PC-3 (cell line): ENCODE measurements at regions of chr2 and their contacts with region 1.

Region 1: GRCh38 chr2:197515739-197516392 is at the start of gene MOB4:
- DNase-seq: peak; percentile 95
- ATAC-seq: peak; percentile 92
- H3K4me3 ChIP-seq: peak within 1 kb of the TSS; percentile 89
- H3K27ac ChIP-seq: peak within 1 kb of the TSS; percentile 48
- H3K4me1 ChIP-seq: peaks cover 17% of the 10 kb centered on the region
- H3K27me3 ChIP-seq: no peaks in the 10 kb centered on the region
- CTCF ChIP-seq: no peak
- total RNA-seq, gene MOB4: 16.8 and 24.9 TPM in 2 replicates

Region 2: DNA sequence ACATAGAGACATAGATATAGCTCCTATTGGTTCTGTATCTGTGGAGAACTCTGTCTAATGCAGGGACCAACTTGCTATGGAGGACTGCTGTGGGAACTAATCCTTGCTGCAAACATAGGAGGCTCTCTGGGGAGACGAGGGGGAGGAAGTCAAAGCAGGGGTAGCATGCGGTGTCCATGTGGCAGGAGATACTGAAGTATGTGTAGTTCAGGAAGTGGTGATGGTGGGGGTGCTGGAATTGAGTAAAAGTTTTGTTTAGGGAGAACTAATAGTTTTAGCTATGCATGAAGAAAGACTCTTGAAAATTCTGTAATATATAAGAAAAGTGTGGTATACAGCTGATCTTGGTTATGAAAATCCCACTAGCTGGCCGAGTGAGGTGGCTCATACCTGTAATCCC is 267.2 kb before region 1 on chr2:
- CTCF ChIA-PET with region 1: no interaction called
- POLR2A ChIA-PET with region 1: no interaction called
- intact Hi-C with region 1: no loop called
- DNase-seq: no peak
- ATAC-seq: no peak
- H3K4me3 ChIP-seq: no peak overlapping the region
- H3K27ac ChIP-seq: no peak overlapping the region
- H3K4me1 ChIP-seq: no peaks in the 10 kb centered on the region
- H3K27me3 ChIP-seq: no peaks in the 10 kb centered on the region
- CTCF ChIP-seq: no peak

Region 3: GRCh38 chr2:197786010-197786877 is 270.4 kb after region 1 on chr2:
- CTCF ChIA-PET with region 1: no interaction called
- POLR2A ChIA-PET with region 1: interaction called, 17 read pairs
- intact Hi-C with region 1: no loop called
- DNase-seq: no peak
- ATAC-seq: no peak
- H3K4me3 ChIP-seq: no peak overlapping the region
- H3K27ac ChIP-seq: no peak overlapping the region
- H3K4me1 ChIP-seq: no peaks in the 10 kb centered on the region
- H3K27me3 ChIP-seq: no peaks in the 10 kb centered on the region
- CTCF ChIP-seq: no peak